ENCODE measurements at regions of chr1 and their contacts with region 1.

Region 1: GRCh38 chr1:230212405-230212936 is 145.4 kb downstream of the GALNT2 start:
- DNase-seq: no peak
- H3K4me3 ChIP-seq: no peak overlapping the region
- H3K27ac ChIP-seq: peak overlapping the region; percentile 77 to 78
- H3K4me1 ChIP-seq: peaks cover 0 to 87% (median 60%) of the 10 kb centered on the region in 4 donors
- H3K27me3 ChIP-seq: no peaks in the 10 kb centered on the region
- CTCF ChIP-seq: no peak

Region 2: DNA sequence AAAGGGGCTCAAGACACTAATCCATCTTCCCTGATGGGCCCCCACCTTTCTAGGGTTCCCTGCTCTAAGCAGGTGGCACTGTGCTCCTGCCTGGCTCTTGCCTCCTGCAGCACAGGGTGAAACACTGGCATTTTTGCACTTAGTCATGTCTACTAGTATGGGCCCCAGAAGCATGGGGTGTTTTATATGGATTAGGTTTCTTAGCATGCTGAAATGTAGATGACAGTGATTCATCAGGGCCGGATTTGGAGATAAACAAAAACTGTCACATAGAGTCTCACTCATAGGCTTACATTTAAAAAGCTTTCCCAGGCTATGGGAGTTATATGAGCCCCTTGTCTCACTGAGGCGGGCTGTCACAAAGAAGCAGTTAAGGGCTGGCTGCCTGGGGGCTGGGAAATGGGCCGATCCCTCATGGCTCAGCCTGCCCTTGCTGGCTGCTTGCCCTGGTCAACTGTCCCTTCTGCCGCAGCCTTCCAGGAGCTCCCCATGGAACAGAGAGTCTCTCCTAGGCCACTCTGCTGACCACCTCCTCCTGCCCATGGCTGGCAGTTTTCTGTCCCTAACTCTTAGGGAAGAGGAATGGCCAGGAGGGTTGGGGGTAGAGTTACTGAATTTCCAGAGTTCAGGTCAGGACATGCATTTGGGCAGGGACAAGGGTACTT is 139.0 kb before region 1 on chr1:
- intact Hi-C with region 1: loop called (anchors 5 kb)
- DNase-seq: no peak
- H3K4me3 ChIP-seq: no peak overlapping the region
- H3K27ac ChIP-seq: peak overlapping the region; percentile 35 to 69
- H3K4me1 ChIP-seq: peaks cover 0 to 88% (median 46%) of the 10 kb centered on the region in 4 donors
- H3K27me3 ChIP-seq: no peaks in the 10 kb centered on the region
- CTCF ChIP-seq: no peak

Region 3: DNA sequence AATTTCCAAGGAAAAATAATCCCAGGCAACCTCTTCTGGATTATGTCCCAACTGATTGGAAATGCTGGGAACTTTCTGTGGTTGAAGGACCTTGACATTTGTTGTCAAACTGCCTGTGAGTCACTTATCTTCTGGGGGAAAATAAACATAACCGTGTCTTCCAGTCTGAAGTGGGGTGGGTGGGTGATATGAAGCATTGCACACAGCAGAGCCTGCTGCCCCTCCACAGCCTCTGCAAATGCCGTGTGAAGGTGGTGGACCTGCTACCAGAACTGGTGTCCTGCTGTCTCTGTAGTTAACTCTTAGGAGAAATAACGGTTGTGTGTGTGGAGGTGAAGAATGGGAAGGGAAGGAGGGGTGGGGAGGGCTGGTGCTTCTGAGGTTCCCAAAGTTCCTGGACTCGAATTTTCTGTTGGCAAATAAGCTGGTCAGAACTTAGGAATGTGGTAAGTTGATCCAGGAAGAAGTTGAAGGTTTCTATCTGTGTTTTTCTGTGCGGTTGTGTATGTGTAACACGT is 122.2 kb before region 1 on chr1:
- intact Hi-C with region 1: loop called (anchors 5 kb)
- DNase-seq: no peak
- H3K4me3 ChIP-seq: no peak overlapping the region
- H3K27ac ChIP-seq: peak overlapping the region; percentile 59 to 60
- H3K4me1 ChIP-seq: peaks cover 0 to 65% (median 35%) of the 10 kb centered on the region in 4 donors
- H3K27me3 ChIP-seq: no peaks in the 10 kb centered on the region
- CTCF ChIP-seq: no peak

Region 4: DNA sequence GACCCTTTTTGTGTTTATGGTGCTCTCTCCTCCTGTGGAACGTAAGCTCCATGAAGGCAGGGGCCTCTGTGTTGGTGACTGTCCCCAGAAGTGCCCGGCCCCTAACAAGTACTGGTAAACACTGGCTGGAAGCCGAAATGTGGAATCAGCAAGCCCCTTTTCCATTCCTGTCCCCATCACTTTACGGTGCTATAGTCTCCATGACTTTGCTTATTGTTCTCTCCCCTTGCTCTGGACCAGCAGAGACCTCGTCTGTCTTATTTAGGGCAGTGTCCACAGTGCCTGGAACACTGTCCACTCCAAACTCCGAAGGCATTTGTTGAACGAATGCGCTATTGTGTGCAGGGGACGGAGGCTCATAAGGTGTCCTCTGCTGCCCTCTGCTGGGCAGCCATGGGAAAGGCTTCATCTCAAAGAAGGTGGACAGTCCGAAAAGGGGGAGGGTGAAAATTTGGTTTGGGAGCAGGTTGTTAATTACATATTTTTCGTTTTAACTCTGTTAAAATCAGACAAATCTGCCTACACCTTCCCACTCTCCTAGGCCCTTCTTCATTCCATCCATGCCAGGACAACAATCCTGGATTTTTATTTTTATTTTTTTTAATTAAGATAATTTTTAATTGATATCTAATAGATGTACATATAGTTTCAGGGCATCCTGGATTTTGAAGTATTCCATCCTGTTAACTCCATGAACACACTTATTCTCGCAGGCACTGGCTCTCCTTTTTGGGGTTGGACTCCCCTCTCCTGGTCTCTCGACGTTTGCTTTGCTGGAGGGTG is 98.1 kb after region 1 on chr1:
- intact Hi-C with region 1: loop called (anchors 10 kb)
- DNase-seq: peak; percentile 81 to 83
- H3K4me3 ChIP-seq: no peak overlapping the region
- H3K27ac ChIP-seq: no peak overlapping the region
- H3K4me1 ChIP-seq: peaks cover 0 to 3% (median 0%) of the 10 kb centered on the region in 4 donors
- H3K27me3 ChIP-seq: peaks cover 0 to 3% of the 10 kb centered on the region in 2 donors
- CTCF ChIP-seq: peak; percentile 87 to 93

Measured in tibial artery (tissue), 4 donors.